Right ventricle myocardium inferior (tissue), 1 donor: ENCODE measurements at regions of chr1 and their contacts with region 1.

Region 1: GRCh38 chr1:112619520-112620376 is at the start of gene CAPZA1:
- DNase-seq: peak; percentile 96
- ATAC-seq: peak; percentile 99
- total RNA-seq, gene CAPZA1: 30.5 TPM

Region 2: DNA sequence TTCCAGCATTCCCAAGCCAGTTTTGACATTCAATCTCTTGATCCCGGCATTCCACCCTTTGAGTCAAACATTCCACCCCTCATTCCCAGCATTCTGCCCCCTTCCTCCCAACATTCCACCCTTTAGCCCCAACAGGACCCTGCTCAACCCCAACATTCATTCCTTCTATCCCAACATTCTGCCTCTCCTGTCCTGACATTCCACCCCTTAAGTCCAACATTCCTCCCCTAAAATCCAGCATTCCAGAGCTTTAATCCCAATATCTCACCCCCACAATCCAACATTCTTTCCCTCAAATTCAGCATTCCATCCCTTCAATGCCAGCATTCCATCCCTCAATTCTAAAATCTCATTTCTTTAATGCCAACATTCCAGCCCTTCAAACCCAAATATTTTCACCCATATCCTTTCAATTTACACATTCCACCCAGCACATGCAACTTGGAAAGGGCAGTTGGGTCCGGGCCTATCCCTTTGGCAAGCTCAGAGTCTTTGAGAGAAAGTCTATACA is 841.2 kb before region 1 on chr1:
- intact Hi-C with region 1: no loop called
- DNase-seq: no peak
- ATAC-seq: no peak

Region 3: DNA sequence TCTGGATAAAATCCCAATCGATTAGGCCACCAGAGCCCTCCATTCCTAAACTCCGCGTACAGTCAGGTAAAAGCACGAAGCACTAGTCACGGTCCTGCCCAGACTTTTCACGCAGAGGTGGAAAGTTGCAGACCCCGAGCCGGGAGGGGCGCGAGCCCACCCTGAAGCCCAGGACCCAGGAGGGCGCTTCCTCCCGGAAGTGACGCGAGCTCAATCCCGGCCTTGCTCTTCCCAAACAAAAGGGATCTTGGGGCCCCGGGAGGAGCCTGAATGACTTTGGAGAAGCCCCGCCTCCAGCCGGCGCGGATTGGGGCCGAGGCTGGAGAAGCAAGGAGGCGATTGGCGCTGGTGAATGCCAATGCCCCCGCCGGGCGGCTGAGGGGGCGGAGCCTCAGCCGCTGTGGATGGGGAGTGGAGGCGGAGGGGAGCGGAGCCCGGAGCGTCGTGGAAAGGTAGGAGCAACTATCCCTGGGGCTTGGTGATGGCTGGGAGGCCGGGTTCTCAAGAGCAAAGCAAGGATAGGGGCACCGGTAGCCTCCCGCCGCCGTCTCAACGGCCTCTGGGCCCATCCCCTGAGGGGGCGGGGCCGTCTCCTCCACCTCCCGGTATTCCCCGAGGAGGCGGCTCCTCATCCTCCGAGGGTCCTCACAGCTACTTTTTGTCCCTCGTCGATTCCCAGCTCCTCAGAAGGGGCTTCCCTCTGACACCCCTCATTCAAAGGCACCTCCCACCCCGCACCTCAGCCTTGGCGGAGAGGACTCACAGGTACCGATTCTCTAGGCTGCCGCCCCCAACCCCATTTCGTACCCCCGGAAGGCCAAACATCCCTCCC is 223.7 kb before region 1 on chr1 and contains the start of gene CTTNBP2NL:
- intact Hi-C with region 1: loop called (anchors 2 kb)
- DNase-seq: peak; percentile 97
- ATAC-seq: peak; percentile 95
- total RNA-seq, gene CTTNBP2NL: 12.5 TPM

Region 4: DNA sequence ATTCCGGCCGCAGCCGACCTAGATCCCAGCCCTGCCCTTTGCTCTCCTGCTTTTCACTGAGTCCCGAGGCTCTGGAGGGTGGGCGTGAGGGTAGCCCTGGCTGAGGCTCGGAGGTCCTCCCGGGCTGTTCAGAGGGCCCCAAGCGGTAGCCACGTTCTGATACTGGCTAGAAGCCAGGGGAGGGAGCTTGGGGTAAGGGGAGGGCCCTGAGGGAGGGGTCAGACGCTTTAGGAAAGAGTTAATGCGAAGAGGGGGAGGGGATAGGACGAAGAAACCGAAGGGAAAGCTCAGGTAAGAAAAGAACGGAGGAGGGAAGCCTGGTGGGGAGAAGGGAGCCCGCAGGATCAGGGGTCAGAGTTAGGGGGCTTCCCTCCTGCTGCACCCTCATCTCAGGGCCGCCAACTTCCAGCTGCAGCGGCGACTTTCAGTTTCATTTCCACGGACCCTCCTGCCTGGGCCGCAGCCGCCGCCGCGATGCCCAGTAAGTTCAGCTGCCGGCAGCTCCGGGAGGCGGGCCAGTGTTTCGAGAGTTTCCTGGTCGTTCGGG is 54.8 kb after region 1 on chr1 and contains the start of gene MOV10:
- intact Hi-C with region 1: loop called (anchors 10 kb)
- DNase-seq: peak; percentile 91
- ATAC-seq: peak; percentile 68
- total RNA-seq, gene MOV10: 16.1 TPM